ENCODE measurements at regions of chr2 and their contacts with region 1.

Region 1: GRCh38 chr2:74458132-74458925 is at the start of gene WBP1:
- DNase-seq: peak; percentile 100
- H3K4me3 Mint-ChIP-seq: peak within 1 kb of the TSS; percentile 92
- H3K27ac Mint-ChIP-seq: peak within 1 kb of the TSS; percentile 99
- H3K4me1 Mint-ChIP-seq: peaks cover 43% of the 10 kb centered on the region
- H3K27me3 Mint-ChIP-seq: no peaks in the 10 kb centered on the region
- total RNA-seq, gene WBP1: 39.4 to 40.0 TPM

Region 2: DNA sequence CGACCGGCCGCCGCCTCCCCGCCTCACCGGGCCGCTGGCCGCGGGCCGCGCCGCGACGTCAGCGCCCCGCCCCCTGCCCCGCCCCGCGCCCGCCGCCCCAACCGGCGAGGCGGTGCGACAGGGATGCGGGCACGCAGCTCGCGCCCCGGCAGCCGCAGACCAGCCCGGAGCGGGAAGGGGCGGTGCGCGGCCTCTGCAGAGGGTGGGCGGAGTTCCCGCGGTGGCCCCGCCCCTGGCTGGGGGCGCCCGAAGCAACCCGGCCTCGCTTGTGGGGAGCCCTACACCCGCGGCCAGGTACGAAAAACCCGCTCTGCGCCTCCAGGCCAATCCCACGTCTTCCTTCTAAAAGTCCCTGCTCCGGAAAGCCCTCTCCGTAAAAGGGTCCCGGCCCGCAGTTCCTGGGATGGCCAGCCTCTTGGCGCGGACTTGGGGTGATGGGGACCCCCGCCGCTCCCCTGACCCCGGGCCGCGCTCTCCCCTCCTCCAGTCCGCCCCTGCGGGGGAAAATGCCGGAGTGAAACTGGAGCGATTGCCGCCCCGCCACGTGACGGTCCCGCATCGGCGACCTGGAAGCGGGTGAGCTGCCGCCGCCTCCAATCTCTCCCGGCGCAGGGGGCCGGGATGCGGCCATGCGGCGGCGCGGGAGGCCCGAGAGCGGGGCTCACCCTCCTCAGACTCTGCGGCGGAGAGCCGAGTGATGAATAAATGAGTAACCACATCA is 1345.3 kb before region 1 on chr2 and contains the start of gene RAB11FIP5:
- CTCF ChIA-PET with region 1: no interaction called
- intact Hi-C with region 1: loop called (anchors 10 kb)
- DNase-seq: peak; percentile 78
- H3K4me3 Mint-ChIP-seq: peak within 1 kb of the TSS; percentile 81
- H3K27ac Mint-ChIP-seq: no peak within 1 kb of the TSS
- H3K4me1 Mint-ChIP-seq: peaks cover 21% of the 10 kb centered on the region
- H3K27me3 Mint-ChIP-seq: no peaks in the 10 kb centered on the region
- total RNA-seq, gene RAB11FIP5: 7.3 to 7.4 TPM

Region 3: DNA sequence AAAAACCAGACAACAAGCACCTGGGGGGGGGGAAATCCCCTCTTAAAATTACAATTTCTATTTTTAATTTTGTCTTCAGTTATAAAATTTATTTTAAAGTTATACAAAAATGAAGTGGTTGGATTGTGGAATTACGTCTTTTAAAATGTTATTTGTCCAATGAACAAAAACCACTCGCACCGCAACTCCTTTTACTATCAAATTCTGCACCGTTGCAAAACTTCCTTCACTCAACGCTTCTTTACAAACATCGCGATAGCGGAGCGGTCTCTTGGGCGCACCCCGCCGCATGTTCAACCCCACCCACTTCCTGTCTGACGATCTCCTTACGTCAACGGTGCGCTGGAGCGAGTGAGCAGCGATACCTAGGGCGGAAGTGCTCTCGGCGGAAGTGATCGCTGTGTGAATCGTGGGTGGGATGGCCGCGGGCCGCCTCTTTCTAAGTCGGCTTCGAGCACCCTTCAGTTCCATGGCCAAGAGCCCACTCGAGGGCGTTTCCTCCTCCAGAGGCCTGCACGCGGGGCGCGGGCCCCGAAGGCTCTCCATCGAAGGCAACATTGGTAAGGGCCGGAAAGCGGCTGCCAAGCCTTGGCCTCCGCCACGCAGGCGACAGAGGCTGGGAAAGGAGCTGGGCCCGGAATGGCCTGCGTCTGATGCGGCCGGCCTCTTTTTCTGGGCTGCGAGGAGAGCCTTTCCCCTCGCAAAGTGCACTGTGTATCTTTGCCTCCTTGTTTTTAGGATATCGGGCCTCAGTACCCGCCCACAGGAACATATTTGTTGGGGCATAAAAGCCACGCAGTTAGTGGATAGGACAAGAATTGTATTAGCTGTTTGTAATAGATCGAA is 531.6 kb before region 1 on chr2 and contains the start of gene DGUOK:
- CTCF ChIA-PET with region 1: no interaction called
- intact Hi-C with region 1: loop called (anchors 5 kb)
- DNase-seq: peak; percentile 99
- H3K4me3 Mint-ChIP-seq: peak within 1 kb of the TSS; percentile 87
- H3K27ac Mint-ChIP-seq: peak within 1 kb of the TSS; percentile 94
- H3K4me1 Mint-ChIP-seq: peaks cover 44% of the 10 kb centered on the region
- H3K27me3 Mint-ChIP-seq: no peaks in the 10 kb centered on the region
- total RNA-seq, gene DGUOK: 112 to 115 TPM

Region 4: GRCh38 chr2:74250189-74250631 is 208.1 kb before region 1 on chr2:
- CTCF ChIA-PET with region 1: interaction called, 3 read pairs
- intact Hi-C with region 1: loop called (anchors 5 kb)
- DNase-seq: peak; percentile 68
- H3K4me3 Mint-ChIP-seq: no peak overlapping the region
- H3K27ac Mint-ChIP-seq: no peak overlapping the region
- H3K4me1 Mint-ChIP-seq: peaks cover 2% of the 10 kb centered on the region
- H3K27me3 Mint-ChIP-seq: no peaks in the 10 kb centered on the region

Region 5: DNA sequence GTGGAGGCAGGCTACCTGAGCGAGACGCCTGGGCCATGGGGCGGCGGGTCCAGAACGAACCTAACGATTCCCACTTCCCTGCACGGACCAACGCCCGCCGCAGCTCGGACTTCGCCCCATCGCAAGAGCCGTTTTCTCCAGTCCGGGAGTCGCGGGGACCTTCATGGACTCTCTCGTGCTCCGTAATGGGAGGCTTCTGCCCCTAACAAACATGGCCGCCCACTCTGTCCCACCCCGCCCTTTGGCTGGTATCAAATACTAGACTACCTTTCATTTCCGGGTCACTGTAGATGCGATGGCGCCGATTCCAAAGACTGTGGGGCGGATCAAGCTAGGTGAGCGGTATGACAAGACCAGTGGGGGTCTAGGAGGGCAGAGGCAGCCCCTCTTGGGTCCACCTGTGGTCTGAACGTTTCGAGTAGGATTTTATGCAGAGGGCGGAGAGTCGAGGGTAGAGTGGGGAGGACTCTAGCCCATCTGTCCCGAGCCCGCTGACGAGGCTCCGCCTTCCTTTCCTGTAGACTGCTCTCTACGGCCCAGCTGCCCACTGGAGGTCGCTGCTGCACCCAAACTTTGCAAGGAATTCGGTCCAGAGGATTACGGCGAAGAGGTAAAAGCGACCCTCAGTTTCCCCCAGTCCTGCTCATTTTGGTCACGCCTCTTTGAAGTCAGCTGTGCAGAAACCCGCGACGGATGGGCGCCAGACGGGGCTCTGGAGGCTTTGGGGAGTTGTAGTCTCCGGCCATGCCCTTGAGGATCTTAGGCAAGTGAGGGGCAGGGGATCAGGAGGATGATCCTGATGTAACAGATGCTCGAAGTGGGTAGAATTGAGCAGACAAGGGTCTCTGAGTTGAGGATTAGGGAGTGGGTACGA is 24.7 kb after region 1 on chr2 and contains the starts of genes CCDC142 and TTC31:
- CTCF ChIA-PET with region 1: interaction called, 10 read pairs
- intact Hi-C with region 1: loop called (anchors 1 kb)
- DNase-seq: peak; percentile 97
- H3K4me3 Mint-ChIP-seq: peak within 1 kb of the TSS; percentile 93
- H3K27ac Mint-ChIP-seq: peak within 1 kb of the TSS; percentile 98
- H3K4me1 Mint-ChIP-seq: peaks cover 32% of the 10 kb centered on the region
- H3K27me3 Mint-ChIP-seq: no peaks in the 10 kb centered on the region
- total RNA-seq, gene CCDC142: 3.7 to 5.8 TPM
- total RNA-seq, gene TTC31: 29.5 to 30.6 TPM

Region 6: GRCh38 chr2:74515981-74516633 is 57.8 kb after region 1 on chr2:
- CTCF ChIA-PET with region 1: no interaction called
- intact Hi-C with region 1: no loop called
- DNase-seq: peak; percentile 79
- H3K4me3 Mint-ChIP-seq: peak overlapping the region; percentile 51
- H3K27ac Mint-ChIP-seq: no peak overlapping the region
- H3K4me1 Mint-ChIP-seq: peaks cover 17% of the 10 kb centered on the region
- H3K27me3 Mint-ChIP-seq: peaks cover 70% of the 10 kb centered on the region

Region 7: DNA sequence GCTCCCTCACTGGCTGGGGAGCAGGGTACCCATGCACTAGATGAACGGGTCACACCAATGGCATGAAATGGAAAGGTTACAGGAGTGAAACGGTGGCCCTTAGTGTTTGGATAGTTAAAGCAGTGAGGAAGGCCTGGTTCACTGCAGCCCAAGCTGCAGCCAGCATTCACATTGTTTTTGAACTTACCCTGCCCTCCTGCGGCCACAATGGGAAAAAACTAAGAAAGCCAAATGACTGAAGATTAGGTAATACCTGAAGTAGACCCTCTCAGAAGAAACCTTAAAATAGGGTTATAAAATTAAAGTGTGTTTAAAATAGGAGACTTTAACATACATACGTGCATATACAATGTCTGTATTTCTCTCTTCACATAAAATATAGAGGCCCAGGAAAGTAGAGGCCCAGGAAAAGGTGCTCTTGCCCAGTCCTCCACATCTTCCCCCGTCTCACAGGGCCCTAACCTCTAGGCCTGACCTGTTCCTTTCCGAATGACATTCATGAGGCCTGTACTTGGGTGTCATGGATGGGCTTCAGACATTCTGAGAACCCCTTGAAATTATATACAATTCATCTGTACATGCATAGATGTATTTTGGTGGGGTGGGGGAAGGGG is 129.4 kb after region 1 on chr2:
- CTCF ChIA-PET with region 1: interaction called, 6 read pairs
- intact Hi-C with region 1: loop called (anchors 1 kb)
- DNase-seq: peak; percentile 79
- H3K4me3 Mint-ChIP-seq: no peak overlapping the region
- H3K27ac Mint-ChIP-seq: no peak overlapping the region
- H3K4me1 Mint-ChIP-seq: peaks cover 28% of the 10 kb centered on the region
- H3K27me3 Mint-ChIP-seq: peaks cover 9% of the 10 kb centered on the region

Measured in activated naive CD4-positive, alpha-beta T cell treated with anti-CD3 and anti-CD28 coated beads for 36 hours (primary cell).